ENCODE measurements at regions of chr1 and their contacts with region 1.

Region 1: GRCh38 chr1:20212685-20213331 is 26.5 kb upstream of the PLA2G2C start:
- DNase-seq: peak; percentile 80
- ATAC-seq: peak; percentile 73

Region 2: DNA sequence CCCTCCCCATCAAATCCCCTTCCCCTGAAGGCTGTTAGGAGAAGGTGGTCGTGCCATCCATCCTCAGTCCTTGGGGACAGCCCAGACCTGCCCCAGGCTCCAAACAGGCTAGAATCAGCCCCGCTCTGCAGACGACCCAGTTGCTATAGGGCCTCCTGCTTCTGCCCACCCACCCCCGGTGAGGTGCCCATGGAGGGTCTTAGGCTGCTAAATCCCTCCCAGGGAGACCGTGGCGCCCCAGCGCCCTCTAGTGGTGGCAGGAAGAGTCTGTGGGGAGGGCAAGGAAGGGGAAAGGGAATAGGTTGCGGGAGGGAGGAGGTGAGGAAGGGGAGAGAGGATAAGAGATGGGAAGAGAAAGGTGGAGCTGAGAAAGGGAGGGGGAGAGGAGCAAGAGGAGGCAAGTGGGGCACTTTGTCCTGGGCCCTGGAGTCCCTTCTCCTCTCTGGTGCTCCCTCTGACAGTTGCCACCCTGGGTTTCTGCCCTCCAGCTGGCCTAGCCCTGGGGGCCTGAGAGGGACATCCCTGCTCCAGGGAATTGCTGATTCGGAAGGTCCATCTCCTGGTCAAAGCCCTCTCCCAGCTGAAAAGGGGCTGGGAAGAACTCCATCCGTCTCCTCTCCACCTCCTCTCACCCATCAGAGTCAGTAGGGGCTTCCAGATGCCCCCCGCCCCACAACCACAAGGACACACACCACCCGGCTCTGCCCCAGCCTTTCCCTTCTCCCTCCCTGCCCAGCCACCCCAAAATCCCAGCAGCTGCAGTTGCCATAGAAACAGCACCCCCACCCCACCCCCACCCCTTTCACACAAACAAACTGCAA is 217.8 kb after region 1 on chr1:
- intact Hi-C with region 1: loop called (anchors 5 kb)
- DNase-seq: peak; percentile 59
- ATAC-seq: peak; percentile 48

Region 3: DNA sequence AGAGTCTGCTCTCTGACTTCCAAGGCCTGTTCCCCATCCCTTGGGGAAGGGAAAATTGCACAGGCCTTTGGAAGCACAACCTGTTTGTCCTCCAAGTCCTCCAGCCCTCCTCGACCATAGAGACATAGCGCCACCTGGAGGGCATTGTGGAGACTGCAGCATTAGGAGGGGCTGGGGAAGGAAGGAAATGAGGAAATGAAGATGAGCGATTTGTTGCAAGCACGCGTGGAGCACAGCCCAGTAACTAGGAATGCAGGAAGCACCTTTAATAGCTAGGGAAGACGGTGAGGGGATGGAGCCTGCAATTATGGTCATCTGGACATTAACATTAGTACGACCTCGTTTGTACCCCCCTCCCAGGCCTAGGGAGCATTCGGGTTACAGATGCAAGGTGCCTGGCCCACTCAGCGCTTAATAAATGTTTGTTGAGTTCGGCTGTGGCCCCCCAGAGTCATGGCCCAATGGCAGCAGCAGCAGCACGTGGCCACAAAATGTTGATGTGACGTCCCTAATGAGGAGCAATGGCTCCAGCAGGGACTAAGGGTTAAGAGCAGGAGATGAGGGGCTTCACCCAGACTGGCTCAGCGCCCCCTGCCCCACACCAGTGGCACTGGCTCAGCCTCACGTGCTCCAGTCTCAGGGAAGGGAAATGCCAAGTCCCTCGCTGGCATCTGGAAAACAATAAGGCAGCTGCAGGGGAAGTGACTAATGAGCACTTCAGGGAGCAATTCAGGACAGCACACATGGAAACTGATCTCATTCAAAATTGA is 281.2 kb after region 1 on chr1:
- intact Hi-C with region 1: loop called (anchors 1 kb)
- DNase-seq: peak; percentile 90
- ATAC-seq: peak; percentile 94